ENCODE measurements at regions of chr10 and their contacts with region 1.

Region 1: GRCh38 chr10:122062831-122063674 is 74.1 kb downstream of the TACC2 start:
- DNase-seq: peak; percentile 95 to 99
- ATAC-seq: peak; percentile 98 to 100
- H3K4me3 ChIP-seq: no peak overlapping the region
- H3K27ac ChIP-seq: peak overlapping the region; percentile 97 to 98
- H3K4me1 ChIP-seq: peaks cover 56% of the 10 kb centered on the region
- CTCF ChIP-seq: no peak
- EP300 ChIP-seq: peak; percentile 92 to 95
- POLR2A ChIP-seq: no peak
- RAD21 ChIP-seq: peak; percentile 36 to 57; a peak in 4 of 5 replicates

Region 2: DNA sequence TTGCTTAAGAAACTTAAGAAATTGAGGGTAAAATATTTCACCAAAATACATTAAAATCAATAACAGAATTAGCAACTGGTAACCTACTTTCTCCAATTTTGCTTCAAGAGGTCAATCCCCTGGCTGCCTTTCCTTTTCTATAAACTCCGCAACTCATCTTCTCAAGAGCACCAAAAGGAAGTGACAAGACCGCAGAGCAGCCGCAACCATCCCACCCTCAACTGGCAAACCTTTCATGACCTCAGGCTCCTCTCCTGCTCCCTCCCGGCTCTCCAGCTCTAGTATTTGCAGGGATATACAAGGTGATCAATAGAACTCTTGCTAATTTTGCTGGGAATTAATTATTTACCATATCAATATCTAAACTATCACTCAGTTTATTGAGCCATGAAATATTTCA is 224.1 kb before region 1 on chr10:
- CTCF ChIA-PET with region 1: no interaction called
- POLR2A ChIA-PET with region 1: no interaction called
- DNase-seq: no peak
- ATAC-seq: no peak
- H3K4me3 ChIP-seq: no peak overlapping the region
- H3K27ac ChIP-seq: no peak overlapping the region
- H3K4me1 ChIP-seq: no peaks in the 10 kb centered on the region
- CTCF ChIP-seq: no peak
- EP300 ChIP-seq: no peak
- POLR2A ChIP-seq: no peak
- RAD21 ChIP-seq: no peak

Region 3: DNA sequence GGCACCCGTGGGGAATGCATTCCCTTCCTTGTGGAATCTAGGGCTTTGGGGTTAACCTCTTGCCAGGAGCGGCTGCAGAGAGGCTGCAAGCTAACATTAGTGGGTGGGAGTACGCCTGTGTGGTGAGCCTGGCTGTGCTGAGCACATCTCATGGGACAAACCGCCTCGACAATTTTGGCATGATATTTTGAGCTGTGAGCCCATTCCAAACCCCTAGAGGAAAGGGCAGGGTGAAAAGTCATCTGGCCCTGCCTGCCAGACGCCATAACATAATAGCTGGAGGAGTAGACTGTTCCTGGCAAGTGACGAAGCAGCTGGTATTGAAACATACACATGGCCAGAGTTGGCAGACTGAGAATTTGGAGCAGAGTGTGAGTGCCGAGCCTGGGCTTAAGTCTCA is 35.9 kb after region 1 on chr10:
- CTCF ChIA-PET with region 1: interaction called, 7 read pairs
- POLR2A ChIA-PET with region 1: interaction called, 38 read pairs
- DNase-seq: no peak
- ATAC-seq: no peak
- H3K4me3 ChIP-seq: no peak overlapping the region
- H3K27ac ChIP-seq: peak overlapping the region; percentile 93 to 95
- H3K4me1 ChIP-seq: peaks cover 35% of the 10 kb centered on the region
- CTCF ChIP-seq: no peak
- EP300 ChIP-seq: no peak
- POLR2A ChIP-seq: no peak
- RAD21 ChIP-seq: no peak

Region 4: GRCh38 chr10:122207596-122207995 is 144.5 kb after region 1 on chr10:
- CTCF ChIA-PET with region 1: no interaction called
- POLR2A ChIA-PET with region 1: no interaction called
- DNase-seq: no peak
- ATAC-seq: no peak
- H3K4me3 ChIP-seq: no peak overlapping the region
- H3K27ac ChIP-seq: no peak overlapping the region
- H3K4me1 ChIP-seq: peaks cover 21% of the 10 kb centered on the region
- CTCF ChIP-seq: no peak
- EP300 ChIP-seq: no peak
- POLR2A ChIP-seq: no peak
- RAD21 ChIP-seq: no peak

Measured in A549 (cell line).